ENCODE measurements at regions of chr7 and their contacts with region 1.

Region 1: GRCh38 chr7:127253281-127254162 is 781 bp upstream of the GRM8 start:
- DNase-seq: peak; percentile 34 to 87
- H3K4me3 ChIP-seq: peak overlapping the region; percentile 62 to 87 (median 77)
- H3K27ac ChIP-seq: no peak overlapping the region
- H3K4me1 ChIP-seq: peaks cover 0 to 8% (median 3%) of the 10 kb centered on the region in 4 experiments; a peak in 3 of 7 replicates
- H3K27me3 ChIP-seq: peaks cover 26 to 53% (median 46%) of the 10 kb centered on the region in 4 experiments
- CTCF ChIP-seq: peak; percentile 68 to 84 (median 79)
- EP300 ChIP-seq: no peak
- POLR2A ChIP-seq: peak; percentile 35 to 60
- RAD21 ChIP-seq: peak; percentile 76 to 88

Region 2: GRCh38 chr7:127226685-127227374 is 26.7 kb before region 1 on chr7:
- CTCF ChIA-PET with region 1: interaction called, 21 read pairs
- POLR2A ChIA-PET with region 1: interaction called, 3 read pairs
- DNase-seq: peak in 1 of 2 experiments; percentile 51
- H3K4me3 ChIP-seq: no peak overlapping the region
- H3K27ac ChIP-seq: no peak overlapping the region
- H3K4me1 ChIP-seq: no peaks in the 10 kb centered on the region; a peak in 1 of 7 replicates
- H3K27me3 ChIP-seq: no peaks in the 10 kb centered on the region
- CTCF ChIP-seq: peak in 1 of 3 experiments; percentile 12; a peak in 2 of 4 replicates
- EP300 ChIP-seq: no peak
- POLR2A ChIP-seq: no peak
- RAD21 ChIP-seq: peak in 1 of 2 experiments; percentile 19; a peak in 1 of 4 replicates

Region 3: GRCh38 chr7:127239814-127240213 is 13.7 kb before region 1 on chr7:
- CTCF ChIA-PET with region 1: interaction called, 11 read pairs
- POLR2A ChIA-PET with region 1: interaction called, 3 read pairs
- DNase-seq: peak in 1 of 2 experiments; percentile 53
- H3K4me3 ChIP-seq: no peak overlapping the region
- H3K27ac ChIP-seq: no peak overlapping the region
- H3K4me1 ChIP-seq: no peaks in the 10 kb centered on the region
- H3K27me3 ChIP-seq: no peaks in the 10 kb centered on the region
- CTCF ChIP-seq: peak; percentile 33 to 74 (median 72); a peak in 2 of 4 replicates
- EP300 ChIP-seq: no peak
- POLR2A ChIP-seq: no peak
- RAD21 ChIP-seq: peak; percentile 42 to 49; a peak in 3 of 4 replicates

Region 4: GRCh38 chr7:127270093-127270492 is 16.6 kb after region 1 on chr7:
- CTCF ChIA-PET with region 1: interaction called, 12 read pairs
- POLR2A ChIA-PET with region 1: no interaction called
- DNase-seq: no peak
- H3K4me3 ChIP-seq: no peak overlapping the region
- H3K27ac ChIP-seq: no peak overlapping the region
- H3K4me1 ChIP-seq: no peaks in the 10 kb centered on the region
- H3K27me3 ChIP-seq: no peaks in the 10 kb centered on the region
- CTCF ChIP-seq: no peak
- EP300 ChIP-seq: no peak
- POLR2A ChIP-seq: no peak
- RAD21 ChIP-seq: no peak

Measured in H1 (cell line).